ENCODE measurements at regions of chr3 and their contacts with region 1.

Region 1: GRCh38 chr3:69306239-69307185 is 79.4 kb downstream of the FRMD4B start:
- DNase-seq: peak; percentile 82
- H3K4me3 Mint-ChIP-seq: no peak overlapping the region
- H3K27ac Mint-ChIP-seq: peak overlapping the region; percentile 23
- H3K4me1 Mint-ChIP-seq: peaks cover 24% of the 10 kb centered on the region
- H3K27me3 Mint-ChIP-seq: no peaks in the 10 kb centered on the region

Region 2: DNA sequence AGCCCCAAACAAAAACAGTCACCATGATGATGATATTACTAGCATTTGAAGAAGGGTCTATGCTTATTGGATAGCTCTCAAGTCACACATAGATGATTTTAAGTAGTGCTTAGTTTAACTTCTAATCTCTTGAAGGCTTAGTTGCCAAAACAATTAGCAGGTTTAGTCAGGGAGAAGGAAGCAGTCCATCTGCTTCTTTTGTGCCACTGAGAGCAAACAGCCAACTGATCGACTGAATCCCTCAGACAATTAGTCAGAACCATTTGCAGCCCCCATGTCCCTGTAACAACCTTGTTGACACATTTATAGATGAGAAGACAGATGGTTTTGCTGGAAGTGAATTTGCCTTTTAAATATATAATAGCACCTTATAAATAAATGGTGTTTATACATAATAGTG is 1067.0 kb before region 1 on chr3:
- CTCF ChIA-PET with region 1: no interaction called
- intact Hi-C with region 1: no loop called
- DNase-seq: no peak
- H3K4me3 Mint-ChIP-seq: no peak overlapping the region
- H3K27ac Mint-ChIP-seq: no peak overlapping the region
- H3K4me1 Mint-ChIP-seq: no peaks in the 10 kb centered on the region
- H3K27me3 Mint-ChIP-seq: no peaks in the 10 kb centered on the region

Region 3: GRCh38 chr3:68328049-68328448 is 978.5 kb before region 1 on chr3:
- CTCF ChIA-PET with region 1: no interaction called
- intact Hi-C with region 1: no loop called
- DNase-seq: no peak
- H3K4me3 Mint-ChIP-seq: no peak overlapping the region
- H3K27ac Mint-ChIP-seq: no peak overlapping the region
- H3K4me1 Mint-ChIP-seq: no peaks in the 10 kb centered on the region
- H3K27me3 Mint-ChIP-seq: no peaks in the 10 kb centered on the region

Region 4: DNA sequence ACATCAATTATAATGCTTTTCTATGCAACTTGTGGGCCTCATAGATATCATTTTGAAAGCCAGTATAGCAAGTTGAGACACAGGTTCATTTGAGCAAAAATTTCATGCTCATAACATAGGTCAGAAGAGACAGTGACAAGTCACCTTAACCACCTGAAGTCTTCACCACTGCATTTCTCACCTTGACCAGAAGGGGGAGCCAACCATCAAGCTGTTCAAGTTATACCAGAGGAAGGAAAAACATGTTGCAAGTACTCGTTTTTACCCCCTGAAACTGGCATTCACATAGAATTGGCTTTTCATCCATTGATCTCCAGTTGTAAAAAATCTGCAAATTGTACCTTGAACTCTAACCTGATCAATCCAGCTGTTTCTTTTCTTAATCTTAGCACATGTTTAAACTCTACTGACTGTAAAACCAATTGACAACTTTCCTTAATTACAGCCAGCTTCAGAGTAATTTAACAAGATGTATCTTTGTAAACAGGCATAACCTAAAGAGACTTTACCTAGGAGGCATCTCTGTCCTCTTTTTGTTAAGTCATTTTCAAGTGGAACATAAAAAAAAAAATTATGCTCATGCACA is 185.5 kb before region 1 on chr3:
- CTCF ChIA-PET with region 1: interaction called, 66 read pairs
- intact Hi-C with region 1: loop called (anchors 1 kb)
- DNase-seq: peak; percentile 95
- H3K4me3 Mint-ChIP-seq: no peak overlapping the region
- H3K27ac Mint-ChIP-seq: no peak overlapping the region
- H3K4me1 Mint-ChIP-seq: peaks cover 3% of the 10 kb centered on the region
- H3K27me3 Mint-ChIP-seq: no peaks in the 10 kb centered on the region

Region 5: DNA sequence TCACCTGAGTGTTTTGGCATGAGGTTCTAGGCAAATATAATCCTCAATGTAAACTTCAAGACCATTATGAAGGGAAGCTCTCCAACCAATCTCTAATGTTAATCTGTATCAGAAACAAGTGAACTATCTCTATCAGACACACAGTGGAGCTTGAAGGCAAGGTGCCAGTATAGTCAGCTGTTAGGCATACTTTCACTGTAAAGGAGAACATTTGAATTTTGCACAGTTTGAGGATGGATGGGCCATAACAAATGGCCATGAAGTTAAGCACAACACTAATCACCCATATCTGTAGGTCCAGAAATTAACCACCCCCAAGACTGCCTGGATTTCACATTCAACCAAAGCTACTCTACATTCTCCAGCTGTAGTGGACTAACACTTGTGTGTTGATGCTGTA is 115.0 kb before region 1 on chr3:
- CTCF ChIA-PET with region 1: interaction called, 13 read pairs
- intact Hi-C with region 1: no loop called
- DNase-seq: no peak
- H3K4me3 Mint-ChIP-seq: no peak overlapping the region
- H3K27ac Mint-ChIP-seq: no peak overlapping the region
- H3K4me1 Mint-ChIP-seq: peaks cover 8% of the 10 kb centered on the region
- H3K27me3 Mint-ChIP-seq: no peaks in the 10 kb centered on the region

Region 6: GRCh38 chr3:69236812-69237707 is 69.5 kb before region 1 on chr3:
- CTCF ChIA-PET with region 1: interaction called, 7 read pairs
- intact Hi-C with region 1: loop called (anchors 1 kb)
- DNase-seq: peak; percentile 17
- H3K4me3 Mint-ChIP-seq: peak overlapping the region; percentile 66
- H3K27ac Mint-ChIP-seq: peak overlapping the region; percentile 50
- H3K4me1 Mint-ChIP-seq: peaks cover 18% of the 10 kb centered on the region
- H3K27me3 Mint-ChIP-seq: no peaks in the 10 kb centered on the region

Region 7: GRCh38 chr3:69288161-69288895 is 18.2 kb before region 1 on chr3:
- CTCF ChIA-PET with region 1: interaction called, 25 read pairs
- intact Hi-C with region 1: loop called (anchors 1 kb)
- DNase-seq: peak; percentile 74
- H3K4me3 Mint-ChIP-seq: no peak overlapping the region
- H3K27ac Mint-ChIP-seq: peak overlapping the region; percentile 6
- H3K4me1 Mint-ChIP-seq: peaks cover 20% of the 10 kb centered on the region
- H3K27me3 Mint-ChIP-seq: no peaks in the 10 kb centered on the region

Region 8: DNA sequence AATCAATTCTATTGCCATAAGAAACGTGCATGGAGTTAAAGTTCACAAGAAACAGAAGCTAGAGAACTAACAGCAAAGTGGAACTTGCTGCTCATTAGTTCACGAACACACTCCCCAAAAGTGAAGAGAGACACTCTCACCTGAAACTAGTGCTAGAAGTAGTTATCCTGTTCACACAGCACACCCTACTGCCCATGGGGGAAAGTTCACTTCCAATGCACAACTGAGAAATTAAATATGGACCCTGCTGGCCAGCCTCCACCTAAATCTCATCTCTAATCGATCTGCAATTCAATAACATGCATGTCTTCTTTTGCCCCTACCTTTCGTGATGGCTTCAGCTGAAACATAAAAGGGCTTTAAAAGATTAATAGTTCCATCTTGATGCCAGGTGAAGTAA is 118.7 kb after region 1 on chr3:
- CTCF ChIA-PET with region 1: interaction called, 6 read pairs
- intact Hi-C with region 1: loop called (anchors 1 kb)
- DNase-seq: peak; percentile 57
- H3K4me3 Mint-ChIP-seq: no peak overlapping the region
- H3K27ac Mint-ChIP-seq: no peak overlapping the region
- H3K4me1 Mint-ChIP-seq: peaks cover 5% of the 10 kb centered on the region
- H3K27me3 Mint-ChIP-seq: no peaks in the 10 kb centered on the region

Region 9: GRCh38 chr3:69510481-69511030 is 204.0 kb after region 1 on chr3:
- CTCF ChIA-PET with region 1: no interaction called
- intact Hi-C with region 1: no loop called
- DNase-seq: no peak
- H3K4me3 Mint-ChIP-seq: no peak overlapping the region
- H3K27ac Mint-ChIP-seq: no peak overlapping the region
- H3K4me1 Mint-ChIP-seq: no peaks in the 10 kb centered on the region
- H3K27me3 Mint-ChIP-seq: peaks cover 6% of the 10 kb centered on the region

Region 10: DNA sequence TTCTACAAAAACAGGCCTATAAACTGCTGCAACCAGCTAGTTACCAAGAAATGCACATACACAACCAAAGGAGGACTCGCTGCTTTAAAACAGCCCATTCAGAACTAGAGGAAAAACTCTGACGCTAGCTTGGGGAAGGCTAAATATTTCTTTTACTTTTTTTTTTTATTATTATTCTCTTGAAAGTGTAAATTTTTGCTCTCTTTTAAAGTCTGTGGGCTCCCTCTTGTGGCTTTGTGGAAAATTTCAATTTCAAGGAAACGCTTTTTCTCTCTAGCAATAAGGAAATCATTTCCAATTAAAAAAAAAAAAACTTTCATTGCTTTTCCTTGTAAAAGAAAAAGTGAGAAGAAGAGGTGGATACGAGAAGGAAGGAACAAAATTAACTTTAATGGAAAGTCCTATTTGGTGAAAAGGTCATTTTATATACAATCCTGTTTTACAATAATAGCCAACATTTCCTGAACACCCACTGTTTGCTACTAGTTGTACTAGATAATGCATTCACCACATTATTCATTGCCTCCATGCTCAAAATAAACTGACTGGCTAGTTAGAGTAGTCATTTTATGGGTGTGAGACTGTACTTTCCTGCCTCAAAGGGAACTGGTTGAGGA is 641.8 kb after region 1 on chr3:
- CTCF ChIA-PET with region 1: interaction called, 3 read pairs
- intact Hi-C with region 1: loop called (anchors 5 kb)
- DNase-seq: no peak
- H3K4me3 Mint-ChIP-seq: no peak overlapping the region
- H3K27ac Mint-ChIP-seq: no peak overlapping the region
- H3K4me1 Mint-ChIP-seq: no peaks in the 10 kb centered on the region
- H3K27me3 Mint-ChIP-seq: no peaks in the 10 kb centered on the region

Measured in activated naive CD4-positive, alpha-beta T cell treated with anti-CD3 and anti-CD28 coated beads for 36 hours (primary cell).